Heart left ventricle (tissue), 16 donors: ENCODE measurements at regions of chr3 and their contacts with region 1.

Region 1: GRCh38 chr3:137105277-137105977 is 147.6 kb downstream of the IL20RB start:
- DNase-seq: peak in 1 of 5 donors; percentile 13
- ATAC-seq: peak; percentile 39 to 70 (median 54)
- H3K4me3 ChIP-seq: no peak overlapping the region
- H3K27ac ChIP-seq: no peak overlapping the region
- H3K4me1 ChIP-seq: peaks cover 0 to 3% (median 0%) of the 10 kb centered on the region in 12 donors
- H3K27me3 ChIP-seq: peaks cover 0 to 30% (median 6%) of the 10 kb centered on the region in 9 donors
- CTCF ChIP-seq: peak; percentile 48 to 77 (median 66)
- POLR2A ChIP-seq: no peak

Region 2: DNA sequence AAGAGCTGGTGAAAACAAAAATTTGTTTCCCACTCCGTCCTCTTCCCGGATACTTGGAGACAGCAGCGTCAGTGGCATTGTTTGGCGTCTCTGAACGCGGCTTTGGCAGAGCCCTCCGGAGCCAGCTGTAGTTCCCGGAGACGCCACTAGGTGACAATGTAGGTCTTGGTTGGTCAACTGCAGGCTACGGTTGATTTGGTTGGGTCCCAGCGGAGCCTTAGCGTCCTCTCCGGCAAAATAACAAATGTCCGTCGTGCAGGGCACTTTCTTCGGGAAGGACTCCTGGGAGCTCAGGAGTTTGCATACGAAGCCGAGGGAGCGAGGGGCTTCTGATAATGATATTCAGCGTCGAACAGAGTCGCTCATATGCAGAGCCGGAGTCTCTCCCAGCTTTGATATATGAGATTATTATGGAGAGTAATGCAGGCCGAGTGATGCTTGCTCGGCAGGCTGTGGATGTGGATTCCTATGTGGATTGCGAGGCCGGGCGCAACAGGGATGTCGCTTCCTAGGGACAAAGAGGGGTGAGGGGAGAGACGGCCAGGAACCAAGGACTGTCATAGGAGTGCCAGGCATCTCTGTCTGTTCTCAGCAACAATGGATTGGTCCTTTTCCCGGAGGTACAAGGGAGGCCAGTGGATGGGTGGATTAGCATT is 72.8 kb before region 1 on chr3:
- intact Hi-C with region 1: loop called in 2 of 10 experiments (anchors 10 kb)
- DNase-seq: peak; percentile 81 to 90 (median 84)
- ATAC-seq: peak; percentile 74 to 94 (median 88)
- H3K4me3 ChIP-seq: peak overlapping the region in 10 of 12 donors; percentile 12 to 54 (median 41)
- H3K27ac ChIP-seq: no peak overlapping the region
- H3K4me1 ChIP-seq: peaks cover 0 to 12% (median 0%) of the 10 kb centered on the region in 12 donors
- H3K27me3 ChIP-seq: peaks cover 0 to 8% (median 3%) of the 10 kb centered on the region in 9 donors
- CTCF ChIP-seq: peak; percentile 96 to 99 (median 97)
- POLR2A ChIP-seq: no peak

Region 3: GRCh38 chr3:137249311-137249940 is 144.0 kb after region 1 on chr3:
- intact Hi-C with region 1: no loop called
- DNase-seq: no peak
- ATAC-seq: no peak
- H3K4me3 ChIP-seq: no peak overlapping the region
- H3K27ac ChIP-seq: no peak overlapping the region
- H3K4me1 ChIP-seq: no peaks in the 10 kb centered on the region
- H3K27me3 ChIP-seq: no peaks in the 10 kb centered on the region
- CTCF ChIP-seq: no peak
- POLR2A ChIP-seq: no peak

Region 4: DNA sequence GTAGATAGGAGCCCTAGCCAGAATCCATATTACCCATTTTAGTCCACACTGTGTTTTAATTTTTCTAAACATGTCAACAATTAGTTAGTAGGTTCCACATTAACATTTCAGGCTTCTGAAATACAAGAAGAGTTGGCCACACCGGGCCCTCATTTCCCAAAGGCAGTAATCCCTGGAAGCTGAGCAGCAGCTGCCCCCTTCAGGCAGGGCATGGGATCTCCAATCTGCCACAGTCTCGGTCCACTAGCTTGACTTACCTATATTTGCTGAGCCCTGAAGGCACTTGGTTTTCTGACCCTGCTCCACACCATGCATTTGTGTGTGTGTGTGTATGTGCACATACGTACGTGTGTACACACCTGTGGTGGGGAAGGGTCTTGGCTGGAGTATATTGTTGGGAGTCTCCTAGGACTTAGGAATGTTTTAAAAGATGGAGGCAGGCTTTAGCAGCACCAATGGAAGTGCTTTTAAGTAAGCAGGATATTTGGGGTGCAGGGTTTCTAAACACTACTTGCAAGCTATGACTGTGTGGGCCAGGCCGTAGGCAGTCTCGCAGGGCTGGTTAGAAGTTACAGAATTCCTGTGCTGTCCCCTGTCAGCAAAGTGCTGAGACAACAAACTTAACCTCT is 587.5 kb after region 1 on chr3:
- intact Hi-C with region 1: loop called in 3 of 10 experiments (anchors 5 to 10 kb)
- DNase-seq: peak in 1 of 5 donors; percentile 25
- ATAC-seq: no peak
- H3K4me3 ChIP-seq: no peak overlapping the region
- H3K27ac ChIP-seq: no peak overlapping the region
- H3K4me1 ChIP-seq: no peaks in the 10 kb centered on the region
- H3K27me3 ChIP-seq: no peaks in the 10 kb centered on the region
- CTCF ChIP-seq: peak in 11 of 12 donors; percentile 15 to 44 (median 27)
- POLR2A ChIP-seq: no peak

Region 5: GRCh38 chr3:137792626-137793271 is 687.3 kb after region 1 on chr3:
- intact Hi-C with region 1: loop called in 1 of 10 experiments (anchors 10 kb)
- DNase-seq: no peak
- ATAC-seq: no peak
- H3K4me3 ChIP-seq: no peak overlapping the region
- H3K27ac ChIP-seq: no peak overlapping the region
- H3K4me1 ChIP-seq: no peaks in the 10 kb centered on the region
- H3K27me3 ChIP-seq: peaks cover 0 to 34% (median 0%) of the 10 kb centered on the region in 9 donors
- CTCF ChIP-seq: peak in 5 of 12 donors; percentile 7 to 32 (median 22)
- POLR2A ChIP-seq: no peak

Region 6: GRCh38 chr3:137946345-137946973 is 841.0 kb after region 1 on chr3:
- intact Hi-C with region 1: loop called (anchors 1 to 10 kb)
- DNase-seq: peak in 4 of 5 donors; percentile 17 to 42 (median 24)
- ATAC-seq: peak in 1 of 4 donors; percentile 29
- H3K4me3 ChIP-seq: no peak overlapping the region
- H3K27ac ChIP-seq: no peak overlapping the region
- H3K4me1 ChIP-seq: no peaks in the 10 kb centered on the region
- H3K27me3 ChIP-seq: no peaks in the 10 kb centered on the region
- CTCF ChIP-seq: peak; percentile 47 to 72 (median 64)
- POLR2A ChIP-seq: no peak

Region 7: GRCh38 chr3:137970914-137971831 is 865.7 kb after region 1 on chr3:
- intact Hi-C with region 1: loop called in 7 of 10 experiments (anchors 2 to 10 kb)
- DNase-seq: peak; percentile 51 to 83 (median 67)
- ATAC-seq: peak in 3 of 4 donors; percentile 85 to 91 (median 91)
- H3K4me3 ChIP-seq: no peak overlapping the region
- H3K27ac ChIP-seq: no peak overlapping the region
- H3K4me1 ChIP-seq: no peaks in the 10 kb centered on the region
- H3K27me3 ChIP-seq: peaks cover 0 to 10% (median 0%) of the 10 kb centered on the region in 9 donors
- CTCF ChIP-seq: peak; percentile 67 to 88 (median 76)
- POLR2A ChIP-seq: no peak

Region 8: GRCh38 chr3:138051946-138052802 is 946.7 kb after region 1 on chr3:
- intact Hi-C with region 1: loop called in 6 of 10 experiments (anchors 5 to 10 kb)
- DNase-seq: peak in 1 of 5 donors; percentile 51
- ATAC-seq: peak; percentile 55 to 79 (median 77)
- H3K4me3 ChIP-seq: no peak overlapping the region
- H3K27ac ChIP-seq: no peak overlapping the region
- H3K4me1 ChIP-seq: peaks cover 0 to 18% (median 0%) of the 10 kb centered on the region in 12 donors
- H3K27me3 ChIP-seq: no peaks in the 10 kb centered on the region
- CTCF ChIP-seq: peak; percentile 35 to 67 (median 51)
- POLR2A ChIP-seq: no peak